ENCODE measurements at regions of chr9 and their contacts with region 1.

Region 1: GRCh38 chr9:89154651-89155336 is 23.8 kb downstream of the SHC3 start:
- DNase-seq: peak; percentile 63
- ATAC-seq: peak; percentile 81
- H3K4me3 Mint-ChIP-seq: no peak overlapping the region
- H3K27ac Mint-ChIP-seq: no peak overlapping the region
- H3K4me1 Mint-ChIP-seq: peaks cover 24% of the 10 kb centered on the region
- H3K27me3 Mint-ChIP-seq: peaks cover 41% of the 10 kb centered on the region

Region 2: GRCh38 chr9:88303721-88304451 is 850.9 kb before region 1 on chr9:
- CTCF ChIA-PET with region 1: no interaction called
- POLR2A ChIA-PET with region 1: no interaction called
- intact Hi-C with region 1: loop called in 1 of 2 experiments (anchors 1 kb)
- DNase-seq: peak; percentile 81
- ATAC-seq: peak; percentile 91
- H3K4me3 Mint-ChIP-seq: no peak overlapping the region
- H3K27ac Mint-ChIP-seq: peak overlapping the region; percentile 68
- H3K4me1 Mint-ChIP-seq: peaks cover 27% of the 10 kb centered on the region
- H3K27me3 Mint-ChIP-seq: peaks cover 18% of the 10 kb centered on the region

Region 3: DNA sequence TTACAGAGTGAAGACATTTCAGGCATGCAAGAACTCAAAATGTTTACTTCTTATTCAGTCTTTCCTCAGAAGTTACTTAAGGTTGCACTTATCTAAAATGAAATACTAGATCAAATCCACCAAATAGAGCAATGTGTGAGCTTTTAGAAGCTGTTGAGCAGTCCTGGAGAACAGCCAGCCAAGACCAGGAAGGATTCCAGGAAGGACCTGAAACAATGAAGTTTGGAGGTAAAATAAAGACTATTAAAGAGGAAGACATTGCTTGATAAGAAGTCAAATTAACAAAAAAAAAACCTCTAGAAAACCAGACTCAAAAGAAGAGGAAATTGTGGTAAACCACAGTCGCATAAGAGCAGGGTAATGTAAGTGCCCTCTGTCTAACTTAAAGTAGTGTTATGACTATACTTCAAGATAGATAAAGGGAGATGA is 319.7 kb before region 1 on chr9:
- CTCF ChIA-PET with region 1: no interaction called
- POLR2A ChIA-PET with region 1: no interaction called
- intact Hi-C with region 1: loop called (anchors 1 to 5 kb)
- DNase-seq: no peak
- ATAC-seq: peak; percentile 93
- H3K4me3 Mint-ChIP-seq: no peak overlapping the region
- H3K27ac Mint-ChIP-seq: no peak overlapping the region
- H3K4me1 Mint-ChIP-seq: peaks cover 21% of the 10 kb centered on the region
- H3K27me3 Mint-ChIP-seq: peaks cover 63% of the 10 kb centered on the region

Region 4: GRCh38 chr9:89137542-89138462 is 17.0 kb before region 1 on chr9:
- CTCF ChIA-PET with region 1: interaction called, 3 read pairs
- POLR2A ChIA-PET with region 1: no interaction called
- intact Hi-C with region 1: loop called in 1 of 2 experiments (anchors 2 kb)
- DNase-seq: peak; percentile 63
- ATAC-seq: peak; percentile 87
- H3K4me3 Mint-ChIP-seq: no peak overlapping the region
- H3K27ac Mint-ChIP-seq: no peak overlapping the region
- H3K4me1 Mint-ChIP-seq: peaks cover 8% of the 10 kb centered on the region
- H3K27me3 Mint-ChIP-seq: peaks cover 13% of the 10 kb centered on the region

Region 5: GRCh38 chr9:89179895-89180667 is 25.3 kb after region 1 on chr9:
- CTCF ChIA-PET with region 1: interaction called, 4 read pairs
- POLR2A ChIA-PET with region 1: interaction called, 3 read pairs
- intact Hi-C with region 1: loop called in 1 of 2 experiments (anchors 2 kb)
- DNase-seq: peak; percentile 84
- ATAC-seq: peak; percentile 90
- H3K4me3 Mint-ChIP-seq: peak overlapping the region; percentile 55
- H3K27ac Mint-ChIP-seq: peak overlapping the region; percentile 1
- H3K4me1 Mint-ChIP-seq: peaks cover 24% of the 10 kb centered on the region
- H3K27me3 Mint-ChIP-seq: peaks cover 46% of the 10 kb centered on the region

Region 6: DNA sequence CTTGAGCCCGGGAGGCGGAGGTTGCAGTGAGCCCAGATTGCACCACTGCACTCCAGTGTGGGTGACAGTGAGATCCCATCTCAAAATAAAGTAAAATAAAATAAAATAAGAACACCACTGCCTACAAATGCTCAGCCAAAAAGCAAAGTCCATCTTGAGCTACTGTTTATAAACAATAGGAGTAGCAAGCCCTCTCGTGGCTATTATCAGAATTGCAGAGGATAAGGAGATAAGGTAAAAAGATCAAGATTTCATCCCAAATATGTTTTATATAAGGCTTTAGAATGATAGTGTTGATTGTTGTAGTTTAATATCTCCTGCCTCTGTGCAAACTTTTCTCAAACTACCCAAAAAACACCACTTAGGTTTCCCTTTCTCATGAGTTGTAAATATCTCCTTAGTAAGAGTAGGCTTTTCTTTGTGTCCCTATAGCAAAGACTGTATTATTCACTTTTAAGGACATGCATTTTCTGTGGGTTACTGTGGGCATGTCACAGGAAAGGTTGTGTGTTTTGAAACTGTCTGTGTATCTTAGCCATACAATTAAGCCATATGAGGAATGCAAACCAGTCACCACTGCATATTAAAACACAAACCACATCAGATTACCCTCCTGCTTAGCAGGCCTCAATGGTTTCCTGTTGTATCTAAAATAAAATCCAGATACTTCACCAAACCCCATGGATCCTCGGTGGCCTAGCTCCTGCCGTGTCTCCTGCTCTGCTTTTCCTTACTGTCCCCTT is 124.4 kb after region 1 on chr9:
- CTCF ChIA-PET with region 1: interaction called, 3 read pairs
- POLR2A ChIA-PET with region 1: no interaction called
- intact Hi-C with region 1: loop called in 1 of 2 experiments (anchors 5 kb)
- DNase-seq: peak; percentile 22
- ATAC-seq: peak; percentile 28
- H3K4me3 Mint-ChIP-seq: no peak overlapping the region
- H3K27ac Mint-ChIP-seq: no peak overlapping the region
- H3K4me1 Mint-ChIP-seq: peaks cover 35% of the 10 kb centered on the region
- H3K27me3 Mint-ChIP-seq: no peaks in the 10 kb centered on the region